Ascending aorta (tissue), 2 donors: ENCODE measurements at regions of chr1 and their contacts with region 1.

Region 1: DNA sequence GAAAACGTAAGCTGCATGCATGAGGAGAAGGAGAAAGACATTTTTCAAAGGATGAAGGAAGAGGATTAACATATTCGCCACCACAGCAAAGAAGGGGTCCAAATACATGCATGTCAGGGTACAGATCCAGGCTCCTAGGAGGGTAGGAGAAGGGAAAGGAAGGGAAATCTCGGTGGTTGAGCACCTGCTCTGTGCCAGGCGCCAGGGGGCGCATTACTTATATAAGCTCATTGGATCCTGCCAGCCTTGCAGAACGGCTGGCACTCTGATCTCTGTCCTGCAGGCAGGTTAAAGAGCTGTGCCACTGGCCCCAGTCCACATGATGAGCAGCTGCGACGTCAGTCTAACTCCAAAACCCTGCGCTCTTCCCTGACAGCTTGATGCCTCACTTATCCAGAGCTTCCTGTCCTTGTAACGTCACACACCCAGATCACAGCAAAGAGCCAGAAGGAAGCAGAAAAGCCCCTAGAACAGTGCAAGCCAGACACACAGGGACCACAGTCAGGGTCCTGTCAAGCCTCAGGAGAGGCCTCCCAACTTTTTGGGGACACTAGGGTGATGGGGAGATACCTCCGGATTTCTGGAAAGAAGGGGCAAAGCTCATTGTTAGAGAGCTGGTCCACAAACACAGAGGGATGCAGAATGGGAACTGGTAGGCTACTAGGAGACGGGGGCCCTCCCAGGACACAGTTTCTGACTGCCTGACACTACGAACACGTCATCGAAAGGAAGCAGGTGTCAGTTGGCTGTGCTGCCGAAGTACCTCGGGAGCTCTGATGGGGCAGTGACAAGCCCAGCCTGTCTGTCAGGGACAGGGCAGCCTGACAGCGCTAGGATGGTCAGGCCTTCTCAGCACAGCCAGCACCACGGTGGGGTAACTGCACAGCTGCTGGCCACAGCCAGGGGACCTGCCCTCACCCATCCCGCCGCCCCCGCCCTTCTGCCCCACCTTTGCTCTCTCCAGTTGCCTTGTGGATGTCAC is 99.1 kb downstream of the BEND5 start:
- DNase-seq: peak in 1 of 2 donors; percentile 79
- H3K4me3 ChIP-seq: no peak overlapping the region
- H3K27ac ChIP-seq: no peak overlapping the region
- H3K4me1 ChIP-seq: peaks cover 0 to 27% of the 10 kb centered on the region in 2 donors
- H3K27me3 ChIP-seq: no peaks in the 10 kb centered on the region
- CTCF ChIP-seq: peak; percentile 49 to 76 (median 72)

Region 2: GRCh38 chr1:48471691-48472576 is 205.7 kb before region 1 on chr1 and contains the start of gene SPATA6:
- intact Hi-C with region 1: loop called (anchors 5 kb)
- DNase-seq: peak; percentile 75 to 98
- H3K4me3 ChIP-seq: peak within 1 kb of the TSS; percentile 45 to 82
- H3K27ac ChIP-seq: peak within 1 kb of the TSS; percentile 90 to 93
- H3K4me1 ChIP-seq: peaks cover 0 to 17% of the 10 kb centered on the region in 2 donors
- H3K27me3 ChIP-seq: no peaks in the 10 kb centered on the region
- CTCF ChIP-seq: no peak
- total RNA-seq, gene SPATA6: 4.2 TPM

Region 3: GRCh38 chr1:48697066-48697707 is 19.6 kb after region 1 on chr1:
- intact Hi-C with region 1: loop called (anchors 1 kb)
- DNase-seq: peak in 1 of 2 donors; percentile 78
- H3K4me3 ChIP-seq: no peak overlapping the region
- H3K27ac ChIP-seq: no peak overlapping the region
- H3K4me1 ChIP-seq: no peaks in the 10 kb centered on the region
- H3K27me3 ChIP-seq: no peaks in the 10 kb centered on the region
- CTCF ChIP-seq: peak; percentile 69 to 90 (median 90)

Region 4: GRCh38 chr1:48773133-48773532 is 95.5 kb after region 1 on chr1:
- intact Hi-C with region 1: no loop called
- DNase-seq: no peak
- H3K4me3 ChIP-seq: no peak overlapping the region
- H3K27ac ChIP-seq: peak overlapping the region; percentile 43 to 98
- H3K4me1 ChIP-seq: peaks cover 0 to 45% of the 10 kb centered on the region in 2 donors
- H3K27me3 ChIP-seq: no peaks in the 10 kb centered on the region
- CTCF ChIP-seq: no peak